ENCODE measurements at regions of chr17 and their contacts with region 1.

Region 1: GRCh38 chr17:37489197-37490001 is at the start of gene DUSP14:
- DNase-seq: peak; percentile 80
- H3K4me3 ChIP-seq: peak within 1 kb of the TSS; percentile 48 to 82 (median 65)
- H3K27ac ChIP-seq: peak within 1 kb of the TSS; percentile 77
- H3K4me1 ChIP-seq: peaks cover 34% of the 10 kb centered on the region
- H3K27me3 ChIP-seq: no peaks in the 10 kb centered on the region
- CTCF ChIP-seq: no peak
- POLR2A ChIP-seq: peak; percentile 81
- total RNA-seq, gene DUSP14: 33.5 and 36.4 TPM in 2 replicates

Region 2: GRCh38 chr17:37107406-37108083 is 381.9 kb before region 1 on chr17:
- CTCF ChIA-PET with region 1: no interaction called
- POLR2A ChIA-PET with region 1: no interaction called
- dilution Hi-C with region 1: no loop called
- intact Hi-C with region 1: no loop called
- DNase-seq: no peak
- H3K4me3 ChIP-seq: no peak overlapping the region
- H3K27ac ChIP-seq: no peak overlapping the region
- H3K4me1 ChIP-seq: peaks cover 4% of the 10 kb centered on the region
- H3K27me3 ChIP-seq: no peaks in the 10 kb centered on the region
- CTCF ChIP-seq: no peak
- POLR2A ChIP-seq: no peak

Region 3: DNA sequence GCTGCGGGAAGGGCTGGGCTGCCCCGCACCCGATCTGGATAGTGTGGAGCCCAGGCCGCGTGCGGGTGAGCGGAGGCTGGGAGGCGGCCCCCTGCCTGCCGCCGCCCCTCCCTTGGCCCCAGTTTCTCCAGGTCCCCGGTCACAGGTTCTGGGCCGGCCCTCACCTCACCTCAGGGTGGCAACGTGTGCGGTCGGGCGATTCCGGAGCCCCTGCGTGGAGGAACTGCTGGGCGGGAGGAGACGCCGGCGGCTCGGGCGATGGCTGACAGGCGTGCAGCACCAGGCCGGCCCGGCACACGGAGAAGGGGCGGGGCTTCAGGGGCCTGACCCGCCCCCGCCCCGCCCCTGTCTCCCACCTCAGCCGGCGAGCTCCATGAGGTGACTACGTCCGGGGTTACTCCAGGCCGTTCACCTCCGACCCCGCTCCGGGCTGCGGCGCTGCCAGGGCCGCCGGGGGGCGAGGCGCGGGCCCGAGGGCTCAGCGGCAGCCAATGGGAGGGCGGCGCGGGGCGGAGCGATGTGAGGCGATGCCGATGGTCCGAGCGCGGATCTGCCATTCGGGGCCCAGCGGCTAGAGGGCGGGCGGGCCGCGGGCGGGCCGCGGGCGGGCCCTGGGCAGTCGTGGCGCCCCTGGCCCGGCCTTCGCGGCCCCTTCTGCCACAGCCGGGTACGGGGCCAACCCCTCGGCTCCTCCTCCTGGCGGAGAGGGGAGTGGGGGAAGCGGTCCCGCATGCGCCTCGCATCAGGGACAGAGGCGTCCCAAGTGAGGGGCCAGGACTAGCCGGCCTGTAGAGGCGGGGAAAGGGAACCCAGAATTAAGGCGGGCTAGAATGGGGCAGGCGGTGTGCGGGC is 130.3 kb before region 1 on chr17:
- CTCF ChIA-PET with region 1: no interaction called
- POLR2A ChIA-PET with region 1: no interaction called
- dilution Hi-C with region 1: no loop called
- intact Hi-C with region 1: no loop called
- DNase-seq: peak; percentile 95
- H3K4me3 ChIP-seq: peak overlapping the region; percentile 47 to 89 (median 84)
- H3K27ac ChIP-seq: peak overlapping the region; percentile 50
- H3K4me1 ChIP-seq: peaks cover 21% of the 10 kb centered on the region
- H3K27me3 ChIP-seq: no peaks in the 10 kb centered on the region
- CTCF ChIP-seq: peak in 1 of 2 donors; percentile 13
- POLR2A ChIP-seq: no peak

Region 4: DNA sequence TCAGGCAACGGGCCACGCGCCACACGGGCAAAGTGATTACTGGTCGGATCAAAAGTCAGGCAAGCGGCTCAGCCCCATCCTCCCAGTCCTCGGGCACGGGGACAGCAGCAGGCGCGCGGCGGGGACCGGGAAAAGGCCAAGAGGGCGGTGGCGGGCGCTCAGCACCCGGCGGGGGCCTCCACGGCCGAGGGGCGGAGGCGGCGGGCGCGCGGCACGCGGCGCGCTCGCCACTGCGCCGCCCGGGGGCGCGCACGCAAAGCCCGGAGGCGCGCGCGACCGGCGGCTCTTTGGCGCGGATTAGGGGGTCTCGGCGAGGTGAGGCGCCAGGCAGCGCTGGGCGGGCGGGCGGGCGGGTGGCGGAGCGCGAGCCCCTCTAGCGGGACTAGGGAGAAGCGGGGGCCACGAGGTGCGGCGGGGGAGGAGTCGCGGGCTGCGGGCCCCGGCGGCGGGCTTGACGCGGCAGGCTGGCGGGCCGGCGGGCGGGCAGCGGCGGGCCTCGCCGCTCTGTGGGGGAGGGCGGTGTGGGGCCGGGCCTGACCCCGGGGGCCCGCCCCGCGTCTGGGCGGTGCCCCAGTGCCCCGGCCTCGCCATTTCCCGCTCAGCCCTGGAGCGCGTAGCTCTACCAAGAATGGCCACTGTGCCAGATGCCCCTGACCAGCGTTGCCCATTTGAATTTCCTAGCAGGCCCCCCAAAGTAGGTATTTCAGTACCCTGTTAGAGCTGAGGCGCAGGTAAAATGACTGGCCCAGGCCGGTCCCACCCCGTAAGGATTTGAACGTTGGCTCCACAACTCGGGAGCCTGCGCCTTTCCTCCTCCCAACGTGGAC is 82.6 kb before region 1 on chr17 and contains the starts of genes ACACA and TADA2A:
- CTCF ChIA-PET with region 1: interaction called, 3 read pairs
- POLR2A ChIA-PET with region 1: no interaction called
- dilution Hi-C with region 1: no loop called
- intact Hi-C with region 1: loop called (anchors 1 kb)
- DNase-seq: peak; percentile 81
- H3K4me3 ChIP-seq: peak within 1 kb of the TSS; percentile 67 to 96 (median 86)
- H3K27ac ChIP-seq: peak within 1 kb of the TSS; percentile 84
- H3K4me1 ChIP-seq: peaks cover 12% of the 10 kb centered on the region
- H3K27me3 ChIP-seq: no peaks in the 10 kb centered on the region
- CTCF ChIP-seq: no peak
- POLR2A ChIP-seq: peak; percentile 95
- total RNA-seq, gene ACACA: 116 and 124 TPM in 2 replicates
- total RNA-seq, gene TADA2A: 20.5 and 22.4 TPM in 2 replicates

Region 5: GRCh38 chr17:37438141-37438540 is 51.3 kb before region 1 on chr17:
- CTCF ChIA-PET with region 1: interaction called, 4 read pairs
- POLR2A ChIA-PET with region 1: interaction called, 3 read pairs
- dilution Hi-C with region 1: no loop called
- intact Hi-C with region 1: loop called (anchors 2 kb)
- DNase-seq: peak; percentile 23
- H3K4me3 ChIP-seq: no peak overlapping the region
- H3K27ac ChIP-seq: no peak overlapping the region
- H3K4me1 ChIP-seq: peaks cover 2% of the 10 kb centered on the region
- H3K27me3 ChIP-seq: no peaks in the 10 kb centered on the region
- CTCF ChIP-seq: peak in 1 of 2 donors; percentile 19
- POLR2A ChIP-seq: no peak

Region 6: GRCh38 chr17:37465069-37465616 is 24.3 kb before region 1 on chr17:
- CTCF ChIA-PET with region 1: no interaction called
- POLR2A ChIA-PET with region 1: no interaction called
- dilution Hi-C with region 1: no loop called
- intact Hi-C with region 1: loop called (anchors 1 kb)
- DNase-seq: peak; percentile 88
- H3K4me3 ChIP-seq: no peak overlapping the region
- H3K27ac ChIP-seq: peak overlapping the region; percentile 94
- H3K4me1 ChIP-seq: peaks cover 16% of the 10 kb centered on the region
- H3K27me3 ChIP-seq: no peaks in the 10 kb centered on the region
- CTCF ChIP-seq: no peak
- POLR2A ChIP-seq: no peak

Region 7: DNA sequence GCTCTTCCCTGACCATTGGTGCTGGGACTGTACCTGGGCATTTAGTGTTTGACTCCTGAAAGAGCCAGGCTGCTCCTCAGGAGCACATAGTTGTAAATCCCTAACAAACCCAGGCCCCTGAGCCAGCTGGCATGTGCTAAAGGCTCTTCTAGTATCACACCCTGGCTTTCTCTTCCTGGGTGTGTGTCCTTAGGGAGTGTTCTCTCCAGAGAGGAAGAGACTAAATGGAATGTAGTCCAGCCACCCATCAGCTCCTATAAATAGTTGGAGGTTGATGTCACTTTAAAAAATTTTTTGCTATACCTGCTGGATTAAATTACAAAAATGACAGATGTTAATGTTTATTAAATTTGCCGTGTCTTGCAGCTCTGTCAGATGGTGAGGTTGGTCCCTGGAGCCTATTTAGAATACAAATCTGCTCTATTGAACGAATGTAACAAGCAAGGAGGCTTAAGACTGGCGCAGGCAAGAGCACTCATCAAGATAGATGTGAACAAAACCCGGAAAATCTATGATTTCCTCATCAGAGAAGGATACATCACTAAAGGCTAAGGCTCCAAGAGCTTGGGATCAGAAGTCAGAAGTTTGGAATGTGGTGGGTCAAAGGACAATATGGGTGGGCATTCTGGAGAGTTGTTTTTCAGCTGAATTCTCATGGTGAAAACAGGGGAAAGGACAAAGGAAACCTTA is 12.8 kb before region 1 on chr17:
- CTCF ChIA-PET with region 1: interaction called, 7 read pairs
- POLR2A ChIA-PET with region 1: interaction called, 8 read pairs
- dilution Hi-C with region 1: no loop called
- intact Hi-C with region 1: loop called (anchors 1 kb)
- DNase-seq: peak; percentile 86
- H3K4me3 ChIP-seq: peak overlapping the region in 1 of 3 experiments; percentile 26
- H3K27ac ChIP-seq: peak overlapping the region; percentile 96
- H3K4me1 ChIP-seq: peaks cover 22% of the 10 kb centered on the region
- H3K27me3 ChIP-seq: no peaks in the 10 kb centered on the region
- CTCF ChIP-seq: no peak
- POLR2A ChIP-seq: no peak

Region 8: GRCh38 chr17:37516127-37516571 is 26.8 kb after region 1 on chr17:
- CTCF ChIA-PET with region 1: no interaction called
- POLR2A ChIA-PET with region 1: no interaction called
- dilution Hi-C with region 1: no loop called
- intact Hi-C with region 1: no loop called
- DNase-seq: no peak
- H3K4me3 ChIP-seq: no peak overlapping the region
- H3K27ac ChIP-seq: no peak overlapping the region
- H3K4me1 ChIP-seq: no peaks in the 10 kb centered on the region
- H3K27me3 ChIP-seq: no peaks in the 10 kb centered on the region
- CTCF ChIP-seq: no peak
- POLR2A ChIP-seq: no peak

Region 9: DNA sequence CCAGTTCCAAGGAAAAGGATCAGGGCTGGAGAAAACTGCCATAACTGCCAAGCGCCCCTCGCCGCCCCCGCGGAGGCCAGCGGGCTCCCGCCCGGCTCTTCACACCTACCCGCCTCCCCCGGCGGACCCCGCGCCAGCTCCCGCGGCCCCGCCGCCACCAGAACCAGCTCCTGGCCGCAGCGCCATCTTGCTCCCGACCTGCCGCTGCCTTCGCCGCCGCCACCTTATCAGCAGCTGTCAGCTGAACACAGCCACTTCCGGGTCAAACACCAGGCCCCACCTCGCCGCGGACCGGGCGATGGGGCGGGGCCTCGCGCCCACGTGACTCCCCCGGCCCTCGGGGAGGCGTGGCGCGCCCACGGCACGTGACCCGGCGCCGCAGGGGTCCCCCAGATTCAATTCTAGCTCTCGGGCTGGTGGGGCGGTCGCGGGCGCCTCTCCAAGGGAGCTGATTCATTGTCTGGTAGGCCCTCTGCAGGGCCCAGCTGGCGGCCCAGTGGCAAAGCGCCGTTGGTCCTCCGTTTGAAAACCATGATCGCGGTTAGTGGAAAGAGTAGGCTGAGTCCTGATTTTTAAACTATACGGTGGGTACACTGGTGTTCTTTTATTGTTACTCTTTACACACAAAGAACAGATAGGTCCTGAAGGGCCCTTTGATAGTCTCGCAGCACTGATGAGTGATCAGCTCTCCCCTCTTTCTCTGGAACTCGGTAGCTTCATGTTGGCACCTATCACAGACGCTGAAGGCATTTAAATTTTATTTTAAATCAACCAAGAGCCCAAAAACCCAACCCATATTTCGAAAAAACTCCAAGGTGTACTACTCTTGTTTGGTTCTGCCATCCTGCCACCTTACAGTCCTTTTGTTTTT is 120.0 kb after region 1 on chr17 and contains the start of gene SYNRG:
- CTCF ChIA-PET with region 1: no interaction called
- POLR2A ChIA-PET with region 1: no interaction called
- dilution Hi-C with region 1: no loop called
- intact Hi-C with region 1: loop called (anchors 5 kb)
- DNase-seq: peak; percentile 98
- H3K4me3 ChIP-seq: peak within 1 kb of the TSS; percentile 79 to 97 (median 97)
- H3K27ac ChIP-seq: peak within 1 kb of the TSS; percentile 82
- H3K4me1 ChIP-seq: peaks cover 30% of the 10 kb centered on the region
- H3K27me3 ChIP-seq: no peaks in the 10 kb centered on the region
- CTCF ChIP-seq: peak; percentile 12 to 47
- POLR2A ChIP-seq: peak; percentile 92
- total RNA-seq, gene SYNRG: 42.2 and 43.3 TPM in 2 replicates

Measured in endothelial cell of umbilical vein (primary cell).